Activated CD4-positive, alpha-beta memory T cell treated with anti-CD3 and anti-CD28 coated beads for 36 hours (primary cell): ENCODE measurements at regions of chr10 and their contacts with region 1.

Region 1: GRCh38 chr10:88990384-88991160 is at the start of gene FAS:
- DNase-seq: peak; percentile 94
- H3K4me3 Mint-ChIP-seq: peak within 1 kb of the TSS; percentile 86
- H3K27ac Mint-ChIP-seq: peak within 1 kb of the TSS; percentile 96
- H3K4me1 Mint-ChIP-seq: peaks cover 65% of the 10 kb centered on the region
- H3K27me3 Mint-ChIP-seq: no peaks in the 10 kb centered on the region
- total RNA-seq, gene FAS: 62.2 to 63.5 TPM

Region 2: DNA sequence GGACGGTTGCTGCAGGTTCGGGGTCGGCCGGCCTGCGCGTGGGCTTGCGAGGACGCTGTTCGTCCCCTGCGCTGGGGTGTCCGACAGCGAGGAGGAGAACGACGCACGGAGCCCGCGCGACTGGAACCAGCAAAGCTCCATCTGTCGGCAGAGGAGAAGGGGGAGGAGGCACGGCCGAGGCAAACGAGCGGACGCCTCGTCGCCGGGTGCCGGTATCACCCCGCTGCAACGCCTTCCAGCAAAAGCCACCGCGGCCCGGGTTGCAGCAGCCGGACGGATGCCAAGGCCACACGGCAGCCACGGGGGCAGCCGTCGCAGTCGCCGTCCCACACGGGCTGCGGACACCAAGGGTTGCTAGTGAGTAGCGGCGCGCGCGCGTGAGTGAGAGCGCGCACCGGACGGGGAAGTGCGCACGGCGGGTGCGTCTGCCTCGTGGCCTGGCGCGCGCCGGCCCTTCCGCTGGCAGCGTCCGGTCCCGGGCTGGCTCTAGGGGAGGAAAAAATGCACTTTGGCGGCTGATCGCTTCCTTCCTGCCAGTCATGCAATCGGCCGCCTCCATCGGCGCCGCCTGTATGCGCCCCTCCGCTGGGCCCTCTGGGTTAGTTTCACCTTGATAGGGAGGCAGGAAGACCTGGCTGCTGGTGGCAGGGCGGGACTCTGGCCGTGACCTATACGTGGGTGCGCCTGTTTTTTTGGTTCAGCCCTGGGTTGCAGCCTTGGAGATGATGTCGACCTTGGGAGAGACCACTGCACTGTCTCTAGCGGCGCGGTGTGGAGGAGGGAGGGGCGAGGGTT is 110.1 kb before region 1 on chr10:
- CTCF ChIA-PET with region 1: interaction called, 5 read pairs
- POLR2A ChIA-PET with region 1: interaction called, 6 read pairs
- intact Hi-C with region 1: loop called (anchors 2 kb)
- DNase-seq: peak; percentile 86
- H3K4me3 Mint-ChIP-seq: peak overlapping the region; percentile 88
- H3K27ac Mint-ChIP-seq: peak overlapping the region; percentile 95
- H3K4me1 Mint-ChIP-seq: peaks cover 59% of the 10 kb centered on the region
- H3K27me3 Mint-ChIP-seq: no peaks in the 10 kb centered on the region

Region 3: DNA sequence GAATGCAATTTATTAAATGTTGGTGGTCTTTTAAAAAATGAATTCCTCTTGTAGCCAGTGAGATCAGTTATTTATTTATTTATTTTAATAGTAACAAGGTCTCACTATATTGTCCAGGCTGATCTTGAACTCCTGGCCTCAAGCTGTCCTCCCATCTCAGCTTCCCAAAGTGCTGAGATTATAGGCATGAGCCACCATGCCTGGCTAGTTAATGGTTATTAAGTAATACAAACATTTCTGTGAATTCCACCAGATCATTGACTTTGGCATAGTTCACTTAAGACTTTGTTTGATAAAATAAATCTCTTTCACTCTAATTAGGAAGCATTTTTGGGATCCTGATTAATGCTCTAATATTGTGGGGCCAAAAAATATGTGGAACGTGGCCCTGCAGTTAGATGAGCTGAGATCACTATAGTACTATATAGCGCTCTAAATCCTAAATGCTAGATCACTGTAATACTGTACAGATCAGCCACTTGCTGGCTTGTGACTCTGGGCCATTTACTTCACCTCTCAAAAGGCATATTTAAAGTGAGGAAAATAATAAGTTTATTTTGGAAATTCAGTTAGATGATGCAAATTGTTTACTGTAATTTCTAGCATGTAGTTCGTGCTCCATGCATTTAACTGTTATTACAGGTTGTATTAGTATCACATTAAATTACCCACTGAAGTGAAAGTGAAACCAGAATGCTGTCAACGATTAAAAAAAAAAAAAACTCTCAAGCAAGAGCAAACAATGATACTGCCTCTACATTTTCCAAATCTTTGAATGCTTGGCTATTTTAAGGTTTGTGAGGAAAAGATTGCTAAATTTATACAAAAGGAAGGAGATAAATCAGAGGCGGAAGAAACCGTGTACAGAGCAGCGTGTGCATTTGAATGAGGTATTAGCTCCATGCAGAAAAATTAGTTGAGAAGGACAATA is 15.9 kb before region 1 on chr10:
- CTCF ChIA-PET with region 1: interaction called, 5 read pairs
- POLR2A ChIA-PET with region 1: interaction called, 4 read pairs
- intact Hi-C with region 1: loop called (anchors 2 kb)
- DNase-seq: no peak
- H3K4me3 Mint-ChIP-seq: peak overlapping the region; percentile 87
- H3K27ac Mint-ChIP-seq: peak overlapping the region; percentile 82
- H3K4me1 Mint-ChIP-seq: peaks cover 26% of the 10 kb centered on the region
- H3K27me3 Mint-ChIP-seq: no peaks in the 10 kb centered on the region

Region 4: DNA sequence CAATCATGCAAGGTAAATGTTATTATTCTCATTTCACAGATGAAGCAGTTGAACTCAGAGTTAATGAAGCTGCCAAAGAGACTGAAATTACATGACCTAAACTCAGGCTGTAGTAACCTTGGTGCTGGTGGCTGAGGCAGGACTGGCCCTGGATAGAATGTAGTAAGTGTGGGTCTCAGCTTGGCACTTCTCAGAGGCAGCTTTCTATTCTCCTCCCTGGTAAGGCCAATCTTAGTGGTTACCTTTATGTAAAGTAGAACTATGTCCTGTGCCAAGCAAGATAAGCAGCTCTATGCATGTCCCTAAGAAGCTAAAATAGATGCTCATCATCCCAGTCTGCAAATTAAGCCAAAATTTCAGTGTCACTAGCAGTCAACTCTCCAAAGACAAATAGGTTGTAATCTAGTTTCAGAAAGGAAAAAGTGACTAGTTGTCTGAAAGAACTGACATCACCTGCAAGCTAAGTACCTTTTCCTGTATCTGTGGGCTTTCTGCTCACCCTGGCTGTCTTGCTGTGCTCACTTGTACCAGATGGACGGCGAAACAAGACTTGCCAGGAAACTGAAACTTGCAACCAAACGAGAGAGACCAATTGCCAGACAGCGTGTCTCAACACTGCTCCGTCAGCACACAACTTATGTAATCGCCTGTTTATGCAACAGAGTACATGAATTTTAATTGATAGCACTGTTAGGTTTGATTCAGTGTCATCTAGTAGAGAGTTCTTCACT is 172.9 kb after region 1 on chr10:
- CTCF ChIA-PET with region 1: no interaction called
- POLR2A ChIA-PET with region 1: interaction called, 3 read pairs
- intact Hi-C with region 1: loop called (anchors 2 kb)
- DNase-seq: peak; percentile 76
- H3K4me3 Mint-ChIP-seq: peak overlapping the region; percentile 10
- H3K27ac Mint-ChIP-seq: peak overlapping the region; percentile 35
- H3K4me1 Mint-ChIP-seq: peaks cover 42% of the 10 kb centered on the region
- H3K27me3 Mint-ChIP-seq: peaks cover 15% of the 10 kb centered on the region